Right ventricle myocardium superior (tissue), 1 donor: ENCODE measurements at regions of chr2 and their contacts with region 1.

Region 1: GRCh38 chr2:12716282-12717190 is at the start of gene TRIB2:
- DNase-seq: peak; percentile 94
- ATAC-seq: peak; percentile 84
- total RNA-seq, gene TRIB2: 32.1 TPM

Region 2: DNA sequence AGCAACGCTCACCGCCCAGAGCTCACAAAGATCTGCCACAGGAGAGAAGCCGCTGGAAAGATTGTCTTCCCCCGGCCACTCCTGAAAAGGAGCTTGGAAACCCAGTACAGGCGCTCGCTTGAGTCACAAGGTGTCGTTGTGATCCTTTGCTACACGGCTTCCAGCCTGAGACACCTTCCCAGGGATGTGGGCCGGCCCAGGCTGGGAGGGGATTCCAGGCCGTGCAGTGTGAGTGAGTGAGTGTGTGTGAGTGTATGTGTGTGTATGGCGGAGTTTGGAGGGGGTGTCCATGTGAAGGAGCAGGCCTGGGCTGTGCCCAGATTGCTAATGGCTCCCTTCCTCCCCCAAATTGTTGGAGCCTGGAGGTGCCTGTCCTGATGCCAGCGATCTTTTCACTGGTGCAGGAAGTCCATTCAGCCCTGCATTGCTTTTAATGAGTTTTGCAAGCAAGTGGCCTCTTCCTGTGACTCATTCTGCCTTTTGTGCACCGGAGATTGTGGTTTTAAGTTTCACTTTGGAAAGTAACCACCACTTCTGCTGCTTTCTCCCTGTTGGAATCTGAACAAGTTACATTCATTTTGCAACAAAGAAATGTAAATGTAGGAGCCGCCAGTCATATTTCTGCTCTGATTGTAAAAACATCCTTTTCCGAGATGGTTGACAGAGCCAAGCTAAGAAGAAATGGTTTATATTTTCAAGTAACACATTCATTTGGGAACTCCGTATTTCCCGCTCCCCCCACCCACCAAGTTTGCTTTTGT is 886.4 kb before region 1 on chr2:
- intact Hi-C with region 1: loop called (anchors 10 kb)
- DNase-seq: peak; percentile 70
- ATAC-seq: peak; percentile 79

Region 3: GRCh38 chr2:12169721-12170120 is 546.8 kb before region 1 on chr2:
- intact Hi-C with region 1: loop called (anchors 10 kb)
- DNase-seq: no peak
- ATAC-seq: peak; percentile 56

Region 4: DNA sequence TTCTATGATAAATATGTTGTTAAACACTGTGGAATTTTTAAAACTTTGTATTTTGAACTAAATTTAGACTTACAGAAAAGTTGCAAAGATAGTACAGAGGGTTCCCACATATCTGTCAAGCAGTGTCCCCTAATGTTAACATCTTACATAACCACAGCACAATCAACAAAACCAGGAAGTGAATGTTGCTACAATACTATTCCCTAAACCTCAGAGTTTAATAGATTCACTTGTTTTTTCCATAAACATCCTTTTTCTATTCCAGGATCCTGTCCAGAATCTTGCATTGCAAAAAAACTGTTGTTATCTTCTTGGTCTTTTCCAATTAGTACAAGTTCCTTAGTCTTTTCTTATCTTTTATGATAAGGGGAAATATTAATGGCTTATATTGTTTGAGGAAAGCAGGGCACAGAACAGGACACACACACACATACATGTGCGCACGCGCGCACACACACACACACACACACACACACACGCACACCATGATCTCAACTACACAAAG is 250.9 kb before region 1 on chr2:
- intact Hi-C with region 1: loop called (anchors 10 kb)
- DNase-seq: no peak
- ATAC-seq: peak; percentile 77

Region 5: GRCh38 chr2:12824351-12824777 is 107.8 kb after region 1 on chr2:
- intact Hi-C with region 1: loop called (anchors 5 kb)
- DNase-seq: peak; percentile 51
- ATAC-seq: peak; percentile 30

Region 6: DNA sequence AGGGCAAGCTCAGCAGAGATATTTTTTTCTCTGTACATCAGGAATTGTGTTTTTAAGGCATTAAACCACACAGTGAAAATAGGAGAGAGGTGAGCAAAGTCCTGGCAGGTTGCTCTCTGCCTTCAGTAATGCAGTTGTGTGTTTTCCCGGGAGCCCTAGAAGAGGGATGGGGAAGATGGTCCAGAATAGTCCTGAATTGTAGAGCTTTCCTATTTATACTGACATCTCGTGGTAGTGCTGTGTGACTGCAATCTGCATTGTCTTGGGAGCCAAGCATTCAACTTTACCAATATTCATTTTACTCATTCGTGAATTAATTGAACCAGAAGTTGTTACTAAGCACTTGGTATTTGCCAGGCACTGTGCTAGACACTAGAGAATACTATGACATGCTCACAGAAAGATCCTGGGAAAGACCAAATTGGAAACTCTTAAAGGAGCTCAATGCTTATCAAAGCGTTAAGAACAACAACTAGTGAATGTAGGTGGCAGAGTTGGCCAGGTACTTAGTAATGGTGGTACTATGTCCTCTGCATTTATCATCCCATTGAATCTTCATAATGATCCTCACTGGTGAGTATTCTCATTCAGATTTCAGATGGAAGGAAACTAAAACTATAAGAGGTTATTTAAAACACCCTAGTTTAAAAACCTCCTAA is 214.8 kb after region 1 on chr2:
- intact Hi-C with region 1: loop called (anchors 5 kb)
- DNase-seq: no peak
- ATAC-seq: peak; percentile 90